PC-9 (cell line): ENCODE measurements at regions of chr10 and their contacts with region 1.

Region 1: GRCh38 chr10:17023386-17024298 is 106.0 kb downstream of the CUBN start:
- DNase-seq: peak; percentile 67 to 87
- H3K4me3 ChIP-seq: no peak overlapping the region
- H3K27ac ChIP-seq: no peak overlapping the region
- H3K4me1 ChIP-seq: peaks cover 11% of the 10 kb centered on the region
- H3K27me3 ChIP-seq: no peaks in the 10 kb centered on the region
- CTCF ChIP-seq: no peak

Region 2: DNA sequence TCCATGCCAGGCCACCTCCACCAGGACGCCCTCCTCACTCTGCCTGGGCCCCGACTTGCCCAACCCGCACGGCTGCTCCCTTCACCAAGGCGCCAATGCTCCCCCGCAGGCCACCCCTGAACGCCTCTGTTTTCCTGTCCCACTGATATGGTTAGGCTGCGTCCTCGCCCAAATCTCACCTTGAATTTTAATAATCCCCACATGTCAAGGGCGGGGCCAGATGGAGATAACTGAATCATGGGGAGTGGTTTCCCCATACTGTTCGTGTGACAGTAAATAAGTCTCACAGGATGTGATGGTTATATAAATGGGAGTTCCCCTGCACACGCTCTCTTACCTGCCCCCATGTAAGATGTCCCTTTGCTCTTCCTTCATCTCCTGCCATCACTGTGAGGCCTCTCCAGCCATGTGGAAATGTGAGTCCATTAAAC is 236.3 kb before region 1 on chr10:
- CTCF ChIA-PET with region 1: no interaction called
- POLR2A ChIA-PET with region 1: no interaction called
- intact Hi-C with region 1: no loop called
- DNase-seq: no peak
- H3K4me3 ChIP-seq: no peak overlapping the region
- H3K27ac ChIP-seq: no peak overlapping the region
- H3K4me1 ChIP-seq: no peaks in the 10 kb centered on the region
- H3K27me3 ChIP-seq: no peaks in the 10 kb centered on the region
- CTCF ChIP-seq: no peak

Region 3: DNA sequence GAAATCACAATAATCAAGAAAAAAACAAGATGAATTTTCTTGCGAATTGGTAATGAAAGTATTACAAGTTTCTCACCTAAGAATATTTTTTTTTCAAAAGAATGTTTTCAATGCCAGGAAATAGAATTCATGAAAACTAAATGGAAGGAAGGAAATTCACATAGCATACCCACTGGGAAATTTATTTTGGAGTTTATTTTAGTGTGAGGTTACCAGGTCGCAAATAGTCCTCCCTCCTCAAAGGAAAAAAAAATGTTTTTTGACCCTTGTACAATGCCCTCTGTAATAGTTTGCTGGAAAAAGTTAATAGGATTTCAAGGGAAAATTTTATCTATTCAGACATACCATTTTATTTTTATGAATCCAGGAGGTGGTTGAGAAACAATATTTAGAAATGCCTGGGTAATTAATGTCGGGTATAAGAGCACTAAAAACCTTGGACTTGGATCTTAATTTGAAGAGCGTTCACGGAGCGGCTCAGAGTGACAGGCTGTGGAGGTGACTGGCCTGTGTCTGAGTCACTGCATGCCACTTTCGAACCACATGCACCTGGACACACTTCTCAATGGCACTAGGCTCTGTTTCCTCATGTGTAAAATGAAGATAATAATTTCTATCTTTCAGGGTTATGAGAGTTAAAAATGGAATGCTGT is 77.7 kb after region 1 on chr10:
- CTCF ChIA-PET with region 1: no interaction called
- POLR2A ChIA-PET with region 1: no interaction called
- intact Hi-C with region 1: loop called (anchors 2 kb)
- DNase-seq: peak in 1 of 2 experiments; percentile 24
- H3K4me3 ChIP-seq: no peak overlapping the region
- H3K27ac ChIP-seq: no peak overlapping the region
- H3K4me1 ChIP-seq: no peaks in the 10 kb centered on the region
- H3K27me3 ChIP-seq: no peaks in the 10 kb centered on the region
- CTCF ChIP-seq: no peak

Region 4: GRCh38 chr10:17169803-17170202 is 146.2 kb after region 1 on chr10:
- CTCF ChIA-PET with region 1: no interaction called
- POLR2A ChIA-PET with region 1: no interaction called
- intact Hi-C with region 1: no loop called
- DNase-seq: no peak
- H3K4me3 ChIP-seq: no peak overlapping the region
- H3K27ac ChIP-seq: no peak overlapping the region
- H3K4me1 ChIP-seq: no peaks in the 10 kb centered on the region
- H3K27me3 ChIP-seq: no peaks in the 10 kb centered on the region
- CTCF ChIP-seq: no peak

Region 5: GRCh38 chr10:17200912-17201793 is 177.5 kb after region 1 on chr10 and contains the start of gene TRDMT1:
- CTCF ChIA-PET with region 1: no interaction called
- POLR2A ChIA-PET with region 1: interaction called, 7 read pairs
- intact Hi-C with region 1: loop called (anchors 10 kb)
- DNase-seq: peak; percentile 56 to 84
- H3K4me3 ChIP-seq: peak within 1 kb of the TSS; percentile 97
- H3K27ac ChIP-seq: peak within 1 kb of the TSS; percentile 68
- H3K4me1 ChIP-seq: peaks cover 16% of the 10 kb centered on the region
- H3K27me3 ChIP-seq: no peaks in the 10 kb centered on the region
- CTCF ChIP-seq: no peak
- total RNA-seq, gene TRDMT1: 3.2 and 4.2 TPM in 2 replicates